WTC11 (cell line): ENCODE measurements at regions of chr1 and their contacts with region 1.

Region 1: DNA sequence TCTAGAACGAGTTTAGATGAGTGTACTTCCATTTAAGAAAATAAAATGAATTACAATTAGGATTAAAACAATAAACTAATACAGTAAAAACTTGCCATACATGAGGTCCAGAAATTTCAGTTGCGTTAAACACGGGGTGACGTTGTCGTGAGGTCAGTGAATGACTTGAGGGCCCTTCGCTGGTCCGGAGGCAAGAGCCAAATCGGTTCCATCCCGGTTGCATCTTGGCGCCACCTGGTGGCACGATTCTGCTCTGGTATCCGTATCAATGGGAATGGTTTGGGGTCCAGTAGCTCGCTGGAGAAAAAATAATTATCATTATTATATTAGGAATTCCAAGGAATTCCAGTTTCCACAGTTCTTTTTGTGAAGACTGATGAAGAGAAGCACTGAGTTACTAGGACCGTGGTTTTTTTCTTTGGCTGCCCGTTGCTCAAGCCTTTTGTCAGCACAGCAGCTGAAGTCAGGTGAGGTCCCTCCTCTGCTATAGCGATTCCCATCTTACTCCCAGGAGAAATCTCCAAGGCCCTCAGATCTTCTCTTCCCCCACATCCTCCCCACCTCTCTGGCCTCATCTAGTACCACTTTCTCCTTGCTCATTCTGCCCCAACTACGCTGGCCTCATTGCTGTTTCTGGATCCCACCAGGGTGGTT is 161.4 kb downstream of the SLC35F3 start:
- DNase-seq: peak; percentile 90
- ATAC-seq: peak; percentile 91
- H3K4me3 Mint-ChIP-seq: no peak overlapping the region
- H3K27ac Mint-ChIP-seq: no peak overlapping the region
- H3K4me1 Mint-ChIP-seq: no peaks in the 10 kb centered on the region
- H3K27me3 Mint-ChIP-seq: no peaks in the 10 kb centered on the region; the same call in 1 of the 2 replicates
- CTCF ChIP-seq: peak; percentile 72

Region 2: DNA sequence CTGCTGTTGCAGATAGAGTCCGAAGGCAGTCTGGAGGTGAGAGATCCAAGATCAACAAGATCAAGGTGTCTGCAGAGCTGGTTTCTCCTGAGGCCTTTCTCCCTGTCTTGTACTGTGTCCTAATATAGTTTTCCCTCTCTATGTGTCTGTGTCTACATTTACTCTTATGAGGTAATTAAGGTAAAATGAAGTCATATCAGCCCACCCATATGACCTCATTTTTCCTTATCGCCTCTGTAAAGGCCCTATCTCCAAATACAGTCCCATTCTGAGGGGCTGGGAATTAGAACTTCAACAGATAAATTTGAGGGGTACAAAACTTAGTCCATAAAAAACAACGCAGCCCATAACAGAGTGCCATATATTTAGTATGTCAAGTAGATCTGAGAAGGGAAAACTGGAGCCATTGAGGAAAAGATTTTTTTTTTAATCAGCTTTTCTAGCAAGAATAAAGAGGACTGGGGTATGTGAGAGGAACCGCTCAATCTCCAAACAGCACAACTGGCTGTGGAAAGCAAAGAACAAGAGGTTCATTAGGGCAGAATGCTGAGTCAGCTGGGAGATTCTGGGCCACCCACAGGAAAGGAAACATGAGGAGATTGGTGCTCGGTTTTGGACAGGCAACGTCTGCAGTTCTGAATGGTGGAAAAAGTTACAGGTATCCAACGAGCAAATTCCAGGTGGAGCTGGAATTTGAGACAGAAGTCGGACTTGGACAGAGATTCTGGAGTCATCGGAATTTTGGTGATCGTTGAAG is 672.7 kb before region 1 on chr1:
- CTCF ChIA-PET with region 1: interaction called, 20 read pairs
- POLR2A ChIA-PET with region 1: no interaction called
- DNase-seq: no peak
- ATAC-seq: no peak
- H3K4me3 Mint-ChIP-seq: no peak overlapping the region
- H3K27ac Mint-ChIP-seq: 0 out of 2 replicates have a peak overlapping the region, but pooled peaks have one; percentile 1
- H3K4me1 Mint-ChIP-seq: peaks cover 24% of the 10 kb centered on the region
- H3K27me3 Mint-ChIP-seq: no peaks in the 10 kb centered on the region
- CTCF ChIP-seq: no peak

Region 3: GRCh38 chr1:233904633-233905415 is 161.1 kb before region 1 on chr1 and contains the start of gene SLC35F3:
- CTCF ChIA-PET with region 1: interaction called, 16 read pairs
- POLR2A ChIA-PET with region 1: no interaction called
- DNase-seq: peak; percentile 81
- ATAC-seq: peak; percentile 93
- H3K4me3 Mint-ChIP-seq: peak within 1 kb of the TSS; percentile 75
- H3K27ac Mint-ChIP-seq: no peak within 1 kb of the TSS
- H3K4me1 Mint-ChIP-seq: peaks cover 10% of the 10 kb centered on the region
- H3K27me3 Mint-ChIP-seq: peaks cover 79% of the 10 kb centered on the region
- CTCF ChIP-seq: peak; percentile 75; the same call in 1 of the 2 replicates
- total RNA-seq, gene SLC35F3: 0.85 to 1.2 TPM (median 0.94 TPM) in 3 replicates

Region 4: DNA sequence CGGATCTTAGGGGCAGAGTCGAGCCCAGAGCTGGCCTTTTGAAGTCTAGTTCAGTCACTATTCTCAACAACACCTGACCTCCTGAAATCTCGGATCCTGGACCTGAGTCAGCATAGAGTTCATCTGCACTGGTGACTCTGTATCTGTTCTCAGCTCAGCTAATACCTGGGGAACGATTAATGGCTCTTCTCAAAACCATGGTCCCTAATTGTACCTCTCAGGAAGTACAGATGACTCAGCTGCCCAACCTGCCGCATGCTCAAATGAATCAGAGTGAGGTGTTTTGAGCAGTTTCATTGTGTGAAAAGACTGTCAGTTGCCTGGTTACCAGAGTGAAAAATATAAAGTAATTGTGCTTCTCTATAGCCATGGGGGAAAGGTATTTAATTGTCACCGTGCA is 72.3 kb before region 1 on chr1:
- CTCF ChIA-PET with region 1: no interaction called
- POLR2A ChIA-PET with region 1: no interaction called
- DNase-seq: no peak
- ATAC-seq: no peak
- H3K4me3 Mint-ChIP-seq: no peak overlapping the region
- H3K27ac Mint-ChIP-seq: no peak overlapping the region
- H3K4me1 Mint-ChIP-seq: 0 out of 2 replicates have a peak, but pooled peaks cover 3% of the 10 kb centered on the region
- H3K27me3 Mint-ChIP-seq: no peaks in the 10 kb centered on the region
- CTCF ChIP-seq: no peak

Region 5: GRCh38 chr1:234008591-234008990 is 57.3 kb before region 1 on chr1:
- CTCF ChIA-PET with region 1: no interaction called
- POLR2A ChIA-PET with region 1: no interaction called
- DNase-seq: no peak
- ATAC-seq: no peak
- H3K4me3 Mint-ChIP-seq: no peak overlapping the region
- H3K27ac Mint-ChIP-seq: no peak overlapping the region
- H3K4me1 Mint-ChIP-seq: peaks cover 26% of the 10 kb centered on the region
- H3K27me3 Mint-ChIP-seq: peaks cover 18% of the 10 kb centered on the region
- CTCF ChIP-seq: no peak

Region 6: DNA sequence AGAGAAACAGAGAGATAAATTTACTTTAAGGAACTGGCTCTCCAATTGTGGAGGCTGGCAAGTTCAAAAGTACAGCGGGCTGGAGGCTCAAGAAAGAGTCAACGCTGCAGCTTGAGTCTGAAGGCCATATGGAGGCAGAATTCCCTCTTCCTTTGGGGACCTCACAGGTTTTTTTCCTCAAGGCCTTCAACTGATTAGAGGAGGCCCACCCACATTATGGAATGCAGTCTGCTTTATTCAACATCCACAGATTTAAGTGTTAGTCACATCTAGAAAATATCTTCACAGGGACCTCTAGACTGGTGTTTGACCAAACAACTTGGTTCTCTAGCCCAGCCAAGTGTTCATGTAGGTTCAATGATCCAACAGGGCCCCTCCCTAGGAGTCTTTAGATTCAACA is 43.6 kb before region 1 on chr1:
- CTCF ChIA-PET with region 1: no interaction called
- POLR2A ChIA-PET with region 1: no interaction called
- DNase-seq: no peak
- ATAC-seq: no peak
- H3K4me3 Mint-ChIP-seq: no peak overlapping the region
- H3K27ac Mint-ChIP-seq: no peak overlapping the region
- H3K4me1 Mint-ChIP-seq: peaks cover 7% of the 10 kb centered on the region
- H3K27me3 Mint-ChIP-seq: peaks cover 32% of the 10 kb centered on the region
- CTCF ChIP-seq: no peak